ENCODE measurements at regions of chr19 and their contacts with region 1.

Region 1: DNA sequence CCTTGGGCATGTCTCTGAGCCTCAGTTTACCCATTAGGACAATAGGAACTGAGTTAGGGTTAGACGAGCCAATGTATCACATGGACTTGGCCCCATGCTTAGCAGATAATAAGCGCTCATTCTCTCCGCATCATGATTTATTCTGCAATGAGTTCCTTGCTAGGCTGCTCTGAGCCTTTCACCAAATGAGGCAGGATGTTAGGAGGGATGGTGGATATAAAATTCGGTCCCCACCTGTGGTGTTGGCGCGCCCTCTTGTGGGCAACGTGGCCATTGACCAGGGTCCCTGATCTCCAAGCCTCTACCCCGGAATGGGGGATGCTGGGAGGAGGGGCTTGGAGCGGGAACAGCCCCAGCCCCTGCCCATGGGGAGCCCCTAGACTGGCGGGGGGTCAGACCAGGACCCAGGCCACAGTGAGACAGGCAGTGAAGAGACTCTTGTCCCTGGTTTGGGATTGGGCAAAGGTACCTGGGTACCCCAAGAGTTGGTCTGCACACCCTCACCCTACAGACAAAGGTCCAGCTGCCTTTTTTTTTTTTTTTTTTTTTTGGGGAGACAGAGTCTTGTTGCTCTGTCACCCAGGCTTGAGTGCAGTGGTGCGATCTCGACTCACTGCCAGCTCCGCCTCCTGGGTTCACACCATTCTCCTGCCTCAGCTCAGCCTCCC is 43.9 kb downstream of the CERS4 start:
- DNase-seq: peak; percentile 54
- H3K4me3 ChIP-seq: no peak overlapping the region
- H3K27ac ChIP-seq: no peak overlapping the region
- H3K4me1 ChIP-seq: peaks cover 3% of the 10 kb centered on the region
- H3K27me3 ChIP-seq: no peaks in the 10 kb centered on the region
- CTCF ChIP-seq: peak; percentile 82 to 94

Region 2: GRCh38 chr19:7986321-7987083 is 266.6 kb before region 1 on chr19:
- CTCF ChIA-PET with region 1: no interaction called
- dilution Hi-C with region 1: no loop called
- in situ Hi-C with region 1: loop called in 1 of 2 experiments (anchors 25 kb)
- intact Hi-C with region 1: no loop called
- DNase-seq: peak; percentile 47
- H3K4me3 ChIP-seq: no peak overlapping the region
- H3K27ac ChIP-seq: no peak overlapping the region
- H3K4me1 ChIP-seq: peaks cover 54% of the 10 kb centered on the region
- H3K27me3 ChIP-seq: no peaks in the 10 kb centered on the region
- CTCF ChIP-seq: no peak

Region 3: GRCh38 chr19:8005534-8006256 is 247.4 kb before region 1 on chr19 and contains the start of gene ELAVL1:
- CTCF ChIA-PET with region 1: no interaction called
- dilution Hi-C with region 1: no loop called
- in situ Hi-C with region 1: no loop called
- intact Hi-C with region 1: loop called (anchors 2 kb)
- DNase-seq: peak; percentile 90
- H3K4me3 ChIP-seq: peak within 1 kb of the TSS; percentile 97 to 100 (median 99)
- H3K27ac ChIP-seq: peak within 1 kb of the TSS; percentile 54
- H3K4me1 ChIP-seq: peaks cover 24% of the 10 kb centered on the region
- H3K27me3 ChIP-seq: no peaks in the 10 kb centered on the region
- CTCF ChIP-seq: no peak
- total RNA-seq, gene ELAVL1: 33.3 to 88.1 TPM

Region 4: DNA sequence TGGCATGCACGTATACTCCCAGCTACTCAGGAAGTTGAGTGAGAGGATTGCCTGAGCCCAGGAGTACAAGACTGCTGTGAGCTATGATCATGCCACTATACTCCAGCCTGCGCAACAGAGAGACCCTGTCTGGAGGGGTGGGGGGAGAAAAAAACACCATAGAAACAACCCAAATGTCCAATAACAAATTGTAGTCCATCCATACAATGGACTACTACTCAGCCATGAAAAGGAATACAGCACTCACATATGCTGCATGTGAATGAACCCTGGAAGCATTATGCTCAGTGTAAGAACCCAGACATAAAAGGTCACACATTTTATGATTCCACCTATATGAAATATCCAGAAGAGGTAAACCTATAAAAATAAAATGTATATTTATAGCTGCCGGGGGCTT is 12.8 kb after region 1 on chr19:
- CTCF ChIA-PET with region 1: no interaction called
- dilution Hi-C with region 1: no loop called
- in situ Hi-C with region 1: no loop called
- intact Hi-C with region 1: no loop called
- DNase-seq: no peak
- H3K4me3 ChIP-seq: no peak overlapping the region
- H3K27ac ChIP-seq: no peak overlapping the region
- H3K4me1 ChIP-seq: no peaks in the 10 kb centered on the region
- H3K27me3 ChIP-seq: no peaks in the 10 kb centered on the region
- CTCF ChIP-seq: no peak

Measured in mammary epithelial cell (primary cell).